PC-9 (cell line): ENCODE measurements at regions of chr19 and their contacts with region 1.

Region 1: DNA sequence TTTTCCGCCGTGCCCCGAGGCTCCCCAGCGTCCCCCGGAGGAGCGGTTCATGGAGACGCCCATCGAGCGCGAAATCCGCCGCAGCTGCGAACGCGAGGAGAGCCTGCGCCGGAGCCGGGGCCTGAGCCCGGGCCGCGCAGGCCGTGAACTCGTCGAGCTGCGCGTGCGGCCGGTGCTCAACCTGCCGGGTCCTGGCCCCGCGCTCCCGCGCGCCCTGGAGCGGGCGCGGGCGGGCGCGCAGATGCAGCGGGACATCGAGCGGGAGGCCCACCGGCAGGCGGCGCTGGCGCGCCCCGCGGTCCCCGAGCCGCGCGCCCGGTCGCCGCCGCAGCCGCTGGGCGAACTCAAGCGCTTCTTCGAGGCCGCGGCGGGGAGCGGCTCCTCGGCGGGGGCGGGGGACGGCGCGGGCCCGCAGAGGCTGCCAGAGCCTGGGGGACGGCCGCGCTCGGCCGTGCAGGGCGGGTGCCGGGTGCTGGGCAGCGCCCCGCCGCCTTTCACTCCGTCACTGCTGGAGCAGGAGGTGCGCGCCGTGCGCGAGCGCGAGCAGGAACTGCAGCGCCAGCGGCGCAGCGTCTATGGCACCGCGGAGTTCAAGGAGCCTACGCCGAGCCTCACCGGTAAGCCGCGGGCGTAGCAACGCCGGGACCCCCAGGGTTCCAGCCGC is 807 bp downstream of the MISP3 start:
- DNase-seq: peak; percentile 61 to 78
- H3K4me3 ChIP-seq: peak overlapping the region; percentile 72
- H3K27ac ChIP-seq: no peak overlapping the region
- H3K4me1 ChIP-seq: 0 out of 2 replicates have a peak, but pooled peaks cover 10% of the 10 kb centered on the region
- H3K27me3 ChIP-seq: no peaks in the 10 kb centered on the region
- CTCF ChIP-seq: no peak

Region 2: DNA sequence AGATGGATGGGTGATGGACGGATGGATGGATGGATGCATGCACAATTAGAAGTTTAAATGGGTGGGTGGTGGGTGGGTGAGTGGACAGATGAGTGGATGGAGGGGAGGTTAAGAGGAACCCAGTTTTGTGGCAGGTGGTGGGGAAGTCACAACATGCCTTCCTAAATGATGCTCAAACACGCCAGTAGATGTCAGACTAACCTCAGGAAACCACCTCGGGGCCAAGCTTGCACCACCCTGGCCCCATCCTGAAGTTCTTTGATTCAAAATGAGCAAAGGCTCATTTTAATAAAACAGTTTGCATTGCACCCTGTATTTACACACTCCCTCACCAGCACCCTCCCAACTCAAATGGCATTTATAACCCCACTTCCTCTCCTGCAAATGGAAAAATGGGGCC is 475.8 kb before region 1 on chr19:
- CTCF ChIA-PET with region 1: no interaction called
- POLR2A ChIA-PET with region 1: no interaction called
- intact Hi-C with region 1: loop called (anchors 5 kb)
- DNase-seq: peak; percentile 40 to 43
- H3K4me3 ChIP-seq: no peak overlapping the region
- H3K27ac ChIP-seq: no peak overlapping the region
- H3K4me1 ChIP-seq: no peaks in the 10 kb centered on the region
- H3K27me3 ChIP-seq: peaks cover 31% of the 10 kb centered on the region
- CTCF ChIP-seq: peak; percentile 78

Region 3: DNA sequence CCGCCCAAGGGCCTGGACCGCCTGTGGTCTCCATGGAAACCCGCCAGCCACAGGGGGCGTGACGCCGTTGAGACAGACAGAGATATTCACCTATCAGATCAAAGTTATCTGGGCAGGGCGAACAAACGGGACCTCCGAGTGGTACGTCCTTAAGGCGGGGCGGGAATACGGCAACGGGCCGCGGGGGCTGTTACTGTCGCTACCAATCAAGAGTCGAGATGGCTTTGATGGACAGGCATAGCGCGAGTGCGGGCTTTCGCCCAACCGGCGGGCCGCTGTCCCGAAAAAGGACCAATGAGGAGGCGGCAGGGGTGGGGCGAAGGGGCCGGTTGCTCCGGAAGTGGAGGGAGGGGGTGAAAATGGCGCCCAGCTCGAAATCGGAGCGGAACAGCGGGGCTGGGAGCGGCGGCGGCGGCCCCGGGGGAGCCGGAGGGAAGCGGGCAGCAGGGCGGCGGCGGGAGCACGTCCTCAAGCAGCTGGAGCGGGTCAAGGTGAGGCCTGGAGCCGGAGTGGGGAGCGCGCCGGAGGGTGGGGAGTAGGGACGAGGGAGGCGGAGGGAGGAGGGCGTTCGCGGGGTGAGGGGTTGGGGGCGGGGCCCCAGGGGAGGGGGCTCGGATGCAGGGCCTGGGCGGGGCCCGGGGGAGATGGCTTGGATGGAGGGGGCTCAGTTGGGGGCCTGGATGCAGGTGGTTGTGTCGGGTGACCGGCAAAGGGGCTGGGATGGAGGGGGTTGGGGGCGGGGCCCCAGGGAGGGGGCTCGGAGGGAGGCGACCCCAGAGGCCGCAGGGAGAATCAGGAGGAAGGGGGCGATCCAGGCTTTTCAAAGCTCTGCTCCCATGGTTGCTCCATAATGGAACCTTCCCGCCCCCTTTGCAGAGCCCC is 121.0 kb before region 1 on chr19 and contains the start of gene DCAF15:
- CTCF ChIA-PET with region 1: no interaction called
- POLR2A ChIA-PET with region 1: no interaction called
- intact Hi-C with region 1: loop called (anchors 1 kb)
- DNase-seq: peak; percentile 99
- H3K4me3 ChIP-seq: peak within 1 kb of the TSS; percentile 82
- H3K27ac ChIP-seq: no peak within 1 kb of the TSS
- H3K4me1 ChIP-seq: peaks cover 6% of the 10 kb centered on the region
- H3K27me3 ChIP-seq: no peaks in the 10 kb centered on the region
- CTCF ChIP-seq: no peak
- total RNA-seq, gene DCAF15: 31.7 and 35.3 TPM in 2 replicates

Region 4: GRCh38 chr19:14031719-14032480 is 41.5 kb before region 1 on chr19 and contains the start of gene IL27RA:
- CTCF ChIA-PET with region 1: no interaction called
- POLR2A ChIA-PET with region 1: no interaction called
- intact Hi-C with region 1: loop called (anchors 5 kb)
- DNase-seq: peak; percentile 48 to 56
- H3K4me3 ChIP-seq: peak within 1 kb of the TSS; percentile 88
- H3K27ac ChIP-seq: 0 out of 2 replicates have a peak within 1 kb of the TSS, but pooled peaks have one; percentile 12
- H3K4me1 ChIP-seq: no peaks in the 10 kb centered on the region; the same call in 1 of the 2 replicates
- H3K27me3 ChIP-seq: no peaks in the 10 kb centered on the region
- CTCF ChIP-seq: peak; percentile 86
- total RNA-seq, gene IL27RA: 7.8 and 11.9 TPM in 2 replicates

Region 5: GRCh38 chr19:14114854-14115253 is 41.5 kb after region 1 on chr19:
- CTCF ChIA-PET with region 1: no interaction called
- POLR2A ChIA-PET with region 1: no interaction called
- intact Hi-C with region 1: no loop called
- DNase-seq: peak; percentile 30 to 46
- H3K4me3 ChIP-seq: no peak overlapping the region
- H3K27ac ChIP-seq: no peak overlapping the region
- H3K4me1 ChIP-seq: peaks cover 21% of the 10 kb centered on the region
- H3K27me3 ChIP-seq: no peaks in the 10 kb centered on the region
- CTCF ChIP-seq: peak; percentile 76

Region 6: DNA sequence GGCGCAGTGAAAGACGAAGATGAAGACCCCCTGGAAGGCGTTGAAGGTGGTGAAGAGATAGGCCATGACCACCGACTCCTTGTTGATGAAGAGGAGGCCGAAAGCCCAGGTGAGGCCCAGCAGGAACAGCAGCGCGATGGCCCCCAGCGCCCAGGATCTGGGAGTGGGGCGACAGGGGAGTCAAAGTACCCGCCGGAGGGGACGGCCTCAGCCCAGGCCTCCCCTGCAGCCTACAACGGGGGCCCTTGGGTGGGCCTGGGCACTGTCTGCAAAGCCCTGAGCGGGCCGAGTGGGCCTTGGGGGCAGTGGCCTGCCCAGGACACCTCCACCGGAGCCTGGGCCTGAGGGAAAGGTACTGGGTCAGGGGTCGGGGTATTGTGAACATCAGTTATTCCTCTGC is 82.0 kb after region 1 on chr19:
- CTCF ChIA-PET with region 1: no interaction called
- POLR2A ChIA-PET with region 1: no interaction called
- intact Hi-C with region 1: no loop called
- DNase-seq: no peak
- H3K4me3 ChIP-seq: no peak overlapping the region
- H3K27ac ChIP-seq: no peak overlapping the region
- H3K4me1 ChIP-seq: no peaks in the 10 kb centered on the region
- H3K27me3 ChIP-seq: no peaks in the 10 kb centered on the region
- CTCF ChIP-seq: no peak

Region 7: DNA sequence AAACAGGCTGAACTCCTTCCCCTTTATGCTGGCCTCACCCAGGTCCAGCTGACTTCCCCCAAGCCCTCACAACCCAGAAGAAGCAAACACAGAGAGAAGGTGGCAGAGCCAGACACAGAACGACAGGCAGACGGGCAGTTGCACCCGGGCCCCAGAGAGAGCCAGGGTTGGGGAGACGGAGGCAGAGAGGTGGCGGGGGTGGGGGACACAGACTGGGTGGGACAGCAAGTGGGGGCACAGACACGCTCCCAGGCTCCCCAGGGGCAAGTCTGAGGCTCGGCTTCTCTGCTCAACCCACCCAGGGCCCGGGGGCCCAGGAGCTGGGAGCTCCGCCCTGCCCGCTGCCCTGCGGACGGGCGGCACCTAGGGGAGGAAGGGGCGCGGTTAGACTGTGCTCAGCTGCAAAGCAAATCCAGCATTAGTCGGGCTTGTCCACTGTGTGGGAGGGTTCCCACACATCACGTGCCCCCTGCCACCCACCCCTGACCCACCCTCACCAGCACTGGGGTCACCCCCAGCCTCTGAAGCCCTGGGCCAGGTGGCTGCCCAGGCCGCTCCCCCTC is 94.3 kb after region 1 on chr19:
- CTCF ChIA-PET with region 1: no interaction called
- POLR2A ChIA-PET with region 1: no interaction called
- intact Hi-C with region 1: no loop called
- DNase-seq: no peak
- H3K4me3 ChIP-seq: no peak overlapping the region
- H3K27ac ChIP-seq: no peak overlapping the region
- H3K4me1 ChIP-seq: no peaks in the 10 kb centered on the region
- H3K27me3 ChIP-seq: no peaks in the 10 kb centered on the region
- CTCF ChIP-seq: no peak